Heart right ventricle (tissue), 16 donors: ENCODE measurements at regions of chr2 and their contacts with region 1.

Region 1: DNA sequence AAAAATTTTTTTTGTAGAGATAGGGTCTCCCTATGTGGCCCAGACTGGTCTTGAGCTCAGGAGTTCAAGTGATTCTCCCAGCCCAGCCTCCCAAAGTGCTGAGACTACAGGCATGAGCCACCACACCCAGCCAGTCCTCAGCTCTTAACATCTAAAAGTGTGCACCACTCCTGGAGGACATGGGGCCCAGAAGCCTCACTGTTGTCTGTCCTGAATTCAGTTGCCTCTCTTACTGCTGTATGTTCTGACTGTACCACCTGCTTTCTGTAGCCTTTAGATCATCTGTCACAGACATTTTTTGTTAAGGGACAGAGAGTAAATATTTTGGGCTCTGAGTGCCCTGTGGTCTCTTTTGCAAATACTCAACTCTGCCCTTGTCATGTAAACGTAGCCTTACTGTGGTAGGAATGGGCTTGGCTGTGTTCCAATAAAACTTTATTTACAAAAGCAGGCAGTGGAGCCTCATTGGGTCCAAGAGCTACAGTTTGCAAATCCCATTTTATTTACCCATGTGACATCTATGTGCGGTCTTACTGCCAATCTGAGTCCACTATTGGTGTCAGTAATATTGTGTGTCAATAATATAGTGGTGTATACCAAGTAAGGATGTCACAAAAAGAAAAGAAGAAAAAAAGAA is 38.1 kb downstream of the TMEM37 start:
- DNase-seq: no peak
- ATAC-seq: no peak
- H3K4me3 ChIP-seq: no peak overlapping the region
- H3K27ac ChIP-seq: no peak overlapping the region
- H3K4me1 ChIP-seq: peaks cover 0 to 19% (median 6%) of the 10 kb centered on the region in 9 donors
- H3K27me3 ChIP-seq: no peaks in the 10 kb centered on the region
- CTCF ChIP-seq: no peak

Region 2: DNA sequence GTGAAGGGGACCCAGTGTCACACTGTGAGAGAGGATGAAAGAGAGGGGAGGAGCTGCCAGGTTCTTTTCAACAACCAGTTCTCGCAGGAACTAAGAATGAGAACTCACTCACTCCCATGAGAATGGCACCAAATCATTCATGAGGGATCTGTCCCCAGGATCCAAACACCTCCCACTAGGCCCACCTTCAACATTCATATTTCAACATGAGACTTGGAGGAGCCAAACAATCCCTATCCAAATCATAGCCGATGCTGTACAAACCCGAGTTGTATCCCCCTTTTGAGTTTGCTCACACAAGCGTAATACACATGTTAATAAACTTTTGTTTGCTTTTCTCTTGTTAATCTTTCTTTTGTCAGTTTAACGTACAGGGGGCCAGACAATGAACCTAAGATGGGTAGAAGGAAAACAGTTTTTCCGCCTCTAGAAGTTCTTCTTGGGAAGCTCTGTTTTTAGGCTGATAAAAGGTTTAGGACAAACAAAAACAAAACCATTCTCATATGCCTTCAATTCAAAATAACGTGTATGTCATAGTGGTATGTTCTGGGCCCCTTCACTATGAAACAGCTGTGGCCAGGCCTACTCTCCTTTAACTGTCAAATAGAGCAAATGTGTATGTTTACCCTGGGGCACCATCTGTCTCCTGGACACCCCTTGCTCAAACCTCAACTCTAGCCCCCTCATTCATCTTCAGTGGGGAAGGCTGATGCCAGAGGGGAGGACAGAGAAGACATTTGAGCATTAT is 47.2 kb before region 1 on chr2:
- intact Hi-C with region 1: loop called in 2 of 10 experiments (anchors 5 kb)
- DNase-seq: no peak
- ATAC-seq: no peak
- H3K4me3 ChIP-seq: no peak overlapping the region
- H3K27ac ChIP-seq: no peak overlapping the region
- H3K4me1 ChIP-seq: peaks cover 0 to 12% (median 7%) of the 10 kb centered on the region in 9 donors
- H3K27me3 ChIP-seq: no peaks in the 10 kb centered on the region
- CTCF ChIP-seq: no peak

Region 3: GRCh38 chr2:121297217-121297830 is 1827.5 kb after region 1 on chr2:
- intact Hi-C with region 1: no loop called
- DNase-seq: no peak
- ATAC-seq: peak in 5 of 8 donors; percentile 42 to 64 (median 53)
- H3K4me3 ChIP-seq: no peak overlapping the region
- H3K27ac ChIP-seq: no peak overlapping the region
- H3K4me1 ChIP-seq: peaks cover 0 to 5% (median 0%) of the 10 kb centered on the region in 9 donors
- H3K27me3 ChIP-seq: peaks cover 0 to 16% (median 0%) of the 10 kb centered on the region in 7 donors
- CTCF ChIP-seq: peak in 8 of 9 donors; percentile 37 to 62 (median 60)